ENCODE measurements at regions of chr2 and their contacts with region 1.

Region 1: DNA sequence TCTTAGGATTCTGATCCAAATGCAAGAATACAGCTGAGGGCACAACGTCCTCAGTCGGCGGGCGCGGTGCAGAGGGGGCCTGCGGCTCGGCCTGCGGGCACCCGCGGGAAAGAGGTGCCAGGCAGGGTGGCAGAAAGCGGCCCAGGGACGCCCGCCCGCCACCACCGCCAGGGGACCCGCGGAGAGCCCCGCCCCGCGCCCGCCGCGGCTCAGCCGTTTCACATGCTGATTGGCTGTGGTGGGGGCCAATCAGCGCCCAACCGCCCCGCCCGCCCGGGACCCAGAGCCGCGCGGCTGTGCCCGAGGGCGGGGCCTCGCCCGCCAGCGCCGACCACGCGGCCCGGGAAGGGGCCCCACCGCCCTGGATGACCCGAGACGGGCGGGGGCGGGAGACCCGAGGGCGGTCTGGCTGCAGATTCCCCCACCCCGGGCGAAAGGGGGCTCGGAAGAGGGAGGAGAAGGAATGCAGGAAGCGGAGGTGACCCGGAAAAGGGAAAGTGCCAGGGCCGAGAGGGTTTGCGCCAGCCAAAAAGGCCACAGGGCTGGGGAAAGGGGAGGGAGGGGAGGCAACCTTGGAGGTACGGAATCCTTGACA is 8.0 kb downstream of the IRS1 start:
- DNase-seq: peak in 9 of 10 donors; percentile 87 to 95 (median 93)
- ATAC-seq: peak; percentile 91 to 93
- H3K4me3 Mint-ChIP-seq: peak overlapping the region; percentile 90 to 99 (median 96)
- H3K27ac Mint-ChIP-seq: peak overlapping the region; percentile 96 to 100 (median 99)
- H3K4me1 Mint-ChIP-seq: peaks cover 17 to 75% (median 48%) of the 10 kb centered on the region in 4 donors
- H3K27me3 Mint-ChIP-seq: no peaks in the 10 kb centered on the region

Region 2: DNA sequence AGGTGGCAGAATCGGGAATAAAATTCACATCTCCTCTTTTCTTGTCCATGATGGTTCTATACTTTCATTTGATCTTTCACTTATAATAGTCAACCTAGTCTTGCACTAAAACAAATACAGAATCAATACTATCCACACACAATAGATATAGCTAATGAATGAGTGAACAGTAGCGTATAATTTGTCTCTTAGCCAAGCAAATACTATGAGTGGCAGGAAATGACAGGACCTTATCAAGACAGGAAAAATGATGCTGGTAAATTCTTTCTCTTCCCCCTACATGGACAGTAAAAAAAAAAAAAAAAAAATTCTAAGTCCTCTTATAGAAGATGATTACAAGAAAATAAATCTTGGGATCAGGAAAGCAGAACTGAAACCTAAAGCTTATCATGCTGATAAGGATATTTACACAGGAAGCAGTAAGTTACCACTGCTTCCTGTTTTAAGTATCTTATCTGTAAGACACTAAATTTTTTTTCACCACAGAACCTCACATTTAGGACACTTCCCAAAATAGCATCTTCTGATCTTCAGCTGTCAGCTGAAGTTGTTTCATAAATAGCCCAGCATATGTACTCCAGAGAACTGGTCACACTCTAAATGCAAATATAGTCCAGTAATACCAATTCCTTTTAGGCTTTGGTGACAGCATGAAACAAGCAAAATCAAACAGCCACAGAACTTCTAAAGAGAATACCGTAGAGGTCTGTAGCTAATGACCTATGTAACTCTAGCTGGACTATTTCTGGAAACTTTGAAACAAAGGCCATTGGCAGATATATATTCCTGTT is 19.0 kb before region 1 on chr2:
- POLR2A ChIA-PET with region 1: interaction called, 26 read pairs
- DNase-seq: peak in 3 of 10 donors; percentile 20 to 36 (median 22)
- ATAC-seq: peak; percentile 69 to 81
- H3K4me3 Mint-ChIP-seq: peak overlapping the region; percentile 63 to 88 (median 78)
- H3K27ac Mint-ChIP-seq: peak overlapping the region in 6 of 10 donors; percentile 33 to 79 (median 56)
- H3K4me1 Mint-ChIP-seq: peaks cover 18 to 44% (median 26%) of the 10 kb centered on the region in 4 donors
- H3K27me3 Mint-ChIP-seq: no peaks in the 10 kb centered on the region

Region 3: GRCh38 chr2:226835796-226836547 is 44.4 kb after region 1 on chr2 and contains the start of gene RHBDD1:
- POLR2A ChIA-PET with region 1: interaction called, 28 read pairs
- DNase-seq: peak; percentile 90 to 98 (median 94)
- ATAC-seq: peak; percentile 85 to 86
- H3K4me3 Mint-ChIP-seq: peak within 1 kb of the TSS; percentile 87 to 97 (median 94)
- H3K27ac Mint-ChIP-seq: peak within 1 kb of the TSS; percentile 98 to 100 (median 99)
- H3K4me1 Mint-ChIP-seq: peaks cover 22 to 63% (median 50%) of the 10 kb centered on the region in 4 donors
- H3K27me3 Mint-ChIP-seq: no peaks in the 10 kb centered on the region
- polyA plus RNA-seq, gene RHBDD1: 13.7 to 20.4 (median 14.8) TPM